Mammary epithelial cell (primary cell): ENCODE measurements at regions of chr1 and their contacts with region 1.

Region 1: GRCh38 chr1:226827968-226828513 is 42.4 kb upstream of the PSEN2 start:
- DNase-seq: peak; percentile 73
- H3K4me3 ChIP-seq: no peak overlapping the region
- H3K27ac ChIP-seq: peak overlapping the region; percentile 29
- H3K4me1 ChIP-seq: peaks cover 8% of the 10 kb centered on the region
- H3K27me3 ChIP-seq: no peaks in the 10 kb centered on the region
- CTCF ChIP-seq: peak; percentile 87 to 99

Region 2: GRCh38 chr1:225097175-225097574 is 1730.9 kb before region 1 on chr1:
- CTCF ChIA-PET with region 1: no interaction called
- dilution Hi-C with region 1: no loop called
- in situ Hi-C with region 1: no loop called
- intact Hi-C with region 1: no loop called
- DNase-seq: no peak
- H3K4me3 ChIP-seq: no peak overlapping the region
- H3K27ac ChIP-seq: no peak overlapping the region
- H3K4me1 ChIP-seq: no peaks in the 10 kb centered on the region
- H3K27me3 ChIP-seq: no peaks in the 10 kb centered on the region
- CTCF ChIP-seq: no peak

Region 3: GRCh38 chr1:225137981-225138380 is 1690.1 kb before region 1 on chr1:
- CTCF ChIA-PET with region 1: no interaction called
- dilution Hi-C with region 1: no loop called
- in situ Hi-C with region 1: no loop called
- intact Hi-C with region 1: no loop called
- DNase-seq: no peak
- H3K4me3 ChIP-seq: no peak overlapping the region
- H3K27ac ChIP-seq: no peak overlapping the region
- H3K4me1 ChIP-seq: no peaks in the 10 kb centered on the region
- H3K27me3 ChIP-seq: no peaks in the 10 kb centered on the region
- CTCF ChIP-seq: no peak

Region 4: DNA sequence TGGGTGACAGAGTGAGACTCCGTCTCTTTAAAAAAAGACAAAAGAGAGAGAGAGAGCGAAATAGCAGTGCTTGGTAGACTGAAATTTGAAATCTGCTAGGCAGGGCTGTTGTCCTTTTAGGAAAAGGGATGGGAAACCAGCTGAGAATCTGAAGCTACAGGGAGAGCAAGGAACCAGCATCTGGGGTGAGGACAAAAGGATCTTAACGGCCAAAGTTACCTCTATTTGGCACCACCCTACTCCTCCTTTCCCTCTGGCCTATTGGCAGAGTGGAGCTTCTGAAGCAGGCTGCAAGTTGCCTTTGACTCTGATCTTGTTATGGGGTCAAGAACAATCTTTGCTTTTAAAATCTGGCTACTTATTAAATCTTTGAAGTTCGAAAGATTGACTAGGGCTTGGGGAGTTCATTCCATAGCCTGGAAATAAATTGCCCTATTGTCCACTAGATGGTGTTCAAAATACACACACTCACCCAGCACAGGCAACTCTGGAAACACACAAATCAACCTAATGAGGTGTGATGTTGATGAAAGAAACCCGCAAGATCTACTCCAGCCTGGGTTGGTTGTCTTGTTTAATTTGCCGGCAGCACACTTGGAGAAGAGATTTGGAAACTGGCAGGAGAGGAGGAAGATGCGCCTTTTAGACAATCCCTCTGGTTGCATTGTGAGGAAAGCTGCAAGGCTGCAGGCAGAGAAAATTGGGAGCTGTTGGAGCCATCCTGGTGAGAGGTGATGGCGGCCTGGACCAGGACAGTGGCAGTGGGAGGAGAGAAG is 403.6 kb before region 1 on chr1:
- CTCF ChIA-PET with region 1: no interaction called
- dilution Hi-C with region 1: no loop called
- in situ Hi-C with region 1: no loop called
- intact Hi-C with region 1: loop called (anchors 2 kb)
- DNase-seq: peak; percentile 39
- H3K4me3 ChIP-seq: no peak overlapping the region
- H3K27ac ChIP-seq: no peak overlapping the region
- H3K4me1 ChIP-seq: no peaks in the 10 kb centered on the region
- H3K27me3 ChIP-seq: no peaks in the 10 kb centered on the region
- CTCF ChIP-seq: peak; percentile 42 to 67

Region 5: DNA sequence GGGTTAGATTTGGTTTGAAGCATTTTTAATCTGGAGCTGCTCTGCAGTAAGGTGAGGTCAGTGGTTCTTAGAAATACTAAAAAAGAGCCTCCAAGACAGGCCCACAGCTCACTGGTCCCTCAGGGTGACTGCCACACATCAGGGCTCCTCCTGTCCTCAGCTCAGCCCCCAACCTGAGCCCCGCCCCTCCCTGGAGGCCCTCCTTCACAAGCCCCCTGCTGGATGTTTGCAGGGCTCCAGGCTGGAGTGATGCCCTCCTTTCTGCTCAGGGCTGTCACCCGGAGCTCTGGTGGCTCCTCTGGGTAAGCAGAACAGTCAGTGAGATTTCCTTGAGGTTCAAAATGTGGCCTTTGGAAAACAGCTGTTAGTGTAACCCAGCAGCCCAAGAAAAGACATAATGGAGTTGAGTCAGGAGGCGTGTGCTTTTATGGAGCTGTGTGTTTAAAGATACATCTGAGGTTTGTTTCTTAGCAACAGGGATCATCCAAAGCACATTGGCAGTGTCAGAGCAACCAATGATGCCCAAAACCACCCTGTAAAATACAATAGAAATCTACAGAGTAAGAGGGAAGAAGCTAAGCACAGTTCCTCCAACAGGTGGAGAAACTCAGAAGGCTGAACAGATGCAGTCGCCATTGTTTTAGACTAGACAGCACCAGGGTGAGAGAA is 258.0 kb before region 1 on chr1:
- CTCF ChIA-PET with region 1: no interaction called
- dilution Hi-C with region 1: no loop called
- in situ Hi-C with region 1: no loop called
- intact Hi-C with region 1: no loop called
- DNase-seq: no peak
- H3K4me3 ChIP-seq: no peak overlapping the region
- H3K27ac ChIP-seq: no peak overlapping the region
- H3K4me1 ChIP-seq: no peaks in the 10 kb centered on the region
- H3K27me3 ChIP-seq: peaks cover 2% of the 10 kb centered on the region
- CTCF ChIP-seq: peak in 1 of 2 donors; percentile 3

Region 6: DNA sequence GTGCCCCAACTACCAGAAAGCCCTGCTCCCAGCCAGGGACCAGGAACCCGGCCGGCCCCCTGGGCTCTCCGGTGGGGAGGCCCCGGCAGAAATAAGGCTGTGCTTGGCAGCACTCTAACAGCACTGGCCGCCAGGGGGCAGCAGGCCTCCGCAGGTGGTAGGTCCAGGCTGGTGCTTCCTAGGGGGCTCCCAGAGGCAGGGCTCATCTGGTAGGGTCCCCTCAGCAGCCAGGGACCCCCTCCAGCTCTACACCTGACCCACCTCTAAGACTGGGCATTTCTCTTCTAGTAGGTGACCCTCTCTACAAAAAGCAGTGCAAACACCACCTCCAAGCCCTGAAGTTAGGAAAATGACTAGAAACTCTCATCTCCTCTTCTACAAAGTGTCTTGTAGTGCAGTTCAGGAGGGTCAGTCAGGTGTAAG is 193.9 kb before region 1 on chr1:
- CTCF ChIA-PET with region 1: interaction called, 4 read pairs
- dilution Hi-C with region 1: no loop called
- in situ Hi-C with region 1: loop called in 1 of 2 experiments (anchors 5 kb)
- intact Hi-C with region 1: loop called (anchors 1 kb)
- DNase-seq: peak; percentile 32
- H3K4me3 ChIP-seq: no peak overlapping the region
- H3K27ac ChIP-seq: no peak overlapping the region
- H3K4me1 ChIP-seq: peaks cover 7% of the 10 kb centered on the region
- H3K27me3 ChIP-seq: no peaks in the 10 kb centered on the region
- CTCF ChIP-seq: peak; percentile 73 to 96

Region 7: GRCh38 chr1:226679853-226680516 is 148.1 kb before region 1 on chr1:
- CTCF ChIA-PET with region 1: interaction called, 21 read pairs
- dilution Hi-C with region 1: no loop called
- in situ Hi-C with region 1: no loop called
- intact Hi-C with region 1: no loop called
- DNase-seq: no peak
- H3K4me3 ChIP-seq: peak overlapping the region in 1 of 3 experiments; percentile 16
- H3K27ac ChIP-seq: no peak overlapping the region
- H3K4me1 ChIP-seq: peaks cover 23% of the 10 kb centered on the region
- H3K27me3 ChIP-seq: no peaks in the 10 kb centered on the region
- CTCF ChIP-seq: no peak

Region 8: DNA sequence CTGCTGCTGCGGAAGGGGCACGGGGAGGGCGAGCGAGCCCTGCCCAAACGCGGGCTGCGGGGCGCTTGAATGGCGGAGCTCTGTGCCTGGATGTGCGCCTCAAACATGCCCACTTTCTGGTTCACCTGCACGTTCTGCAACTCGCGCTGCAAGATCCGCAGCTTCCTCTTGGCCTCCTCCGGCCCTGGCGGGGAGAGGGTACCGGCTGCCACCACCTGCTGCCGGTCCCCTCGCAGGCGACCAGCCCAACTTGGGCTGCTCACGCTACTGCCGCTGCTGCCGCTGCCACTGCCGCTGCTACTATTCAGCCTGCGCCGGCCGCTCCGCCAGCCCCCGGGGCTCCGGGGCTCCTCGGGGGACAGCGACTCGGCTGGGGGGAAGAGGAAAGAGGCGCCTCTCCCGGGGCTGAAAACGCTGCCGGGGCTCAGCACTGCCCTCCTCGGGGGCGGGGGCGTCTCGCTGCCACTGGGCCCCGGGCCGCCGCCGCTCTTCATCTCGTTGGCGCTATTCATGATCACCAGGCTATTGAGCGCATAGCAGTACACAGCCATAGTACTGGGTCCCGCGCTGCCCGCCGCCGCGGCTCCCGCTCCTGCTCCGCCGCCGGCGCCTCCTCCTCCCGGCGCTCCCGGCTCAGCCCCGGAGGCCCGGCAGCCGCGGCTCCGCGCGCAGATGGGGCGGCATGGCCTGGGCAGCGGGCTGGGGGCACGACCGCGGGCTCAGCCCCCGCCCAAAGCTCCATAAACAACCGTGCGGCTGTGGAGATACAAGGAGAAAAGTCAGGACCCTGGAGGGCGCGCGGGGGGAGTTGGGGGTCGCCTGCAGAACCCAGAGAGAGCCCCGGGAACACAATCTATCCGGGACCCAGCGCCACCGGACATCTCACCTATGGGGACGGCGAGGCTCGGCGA is 90.9 kb before region 1 on chr1:
- CTCF ChIA-PET with region 1: interaction called, 25 read pairs
- dilution Hi-C with region 1: no loop called
- in situ Hi-C with region 1: no loop called
- intact Hi-C with region 1: loop called (anchors 1 kb)
- DNase-seq: peak; percentile 10
- H3K4me3 ChIP-seq: peak overlapping the region; percentile 67 to 89 (median 70)
- H3K27ac ChIP-seq: peak overlapping the region; percentile 53
- H3K4me1 ChIP-seq: peaks cover 22% of the 10 kb centered on the region
- H3K27me3 ChIP-seq: no peaks in the 10 kb centered on the region
- CTCF ChIP-seq: peak in 1 of 2 donors; percentile 13

Region 9: GRCh38 chr1:226973371-226973897 is 145.4 kb after region 1 on chr1:
- CTCF ChIA-PET with region 1: no interaction called
- dilution Hi-C with region 1: no loop called
- in situ Hi-C with region 1: no loop called
- intact Hi-C with region 1: no loop called
- DNase-seq: no peak
- H3K4me3 ChIP-seq: no peak overlapping the region
- H3K27ac ChIP-seq: no peak overlapping the region
- H3K4me1 ChIP-seq: peaks cover 9% of the 10 kb centered on the region
- H3K27me3 ChIP-seq: no peaks in the 10 kb centered on the region
- CTCF ChIP-seq: no peak